ENCODE measurements at regions of chr17 and their contacts with region 1.

Region 1: DNA sequence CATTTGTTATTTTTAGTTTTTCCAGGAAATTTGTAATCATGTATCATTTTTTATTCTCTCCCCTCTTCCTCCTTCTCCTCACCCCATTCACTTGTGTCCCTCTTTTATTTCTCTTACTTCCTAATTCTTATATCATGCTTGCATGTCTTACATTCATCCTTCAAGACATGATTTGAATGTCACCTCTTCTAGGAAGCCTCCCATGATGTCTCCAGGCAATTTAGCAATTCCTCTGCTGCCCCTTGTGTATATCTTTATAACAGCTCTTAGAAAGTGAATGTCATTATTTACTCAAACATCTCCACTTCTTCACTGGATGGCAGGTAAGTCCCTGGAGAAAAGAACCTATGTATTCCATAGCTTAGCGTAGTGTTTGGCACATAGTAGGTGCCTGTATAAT is 7.8 kb downstream of the HNF1B start:
- DNase-seq: no peak
- ATAC-seq: no peak
- H3K4me3 ChIP-seq: no peak overlapping the region
- H3K27ac ChIP-seq: no peak overlapping the region
- H3K4me1 ChIP-seq: peaks cover 3% of the 10 kb centered on the region
- H3K27me3 ChIP-seq: peaks cover 47% of the 10 kb centered on the region
- CTCF ChIP-seq: peak; percentile 37
- POLR2A ChIP-seq: no peak
- RAD21 ChIP-seq: peak; percentile 40

Region 2: DNA sequence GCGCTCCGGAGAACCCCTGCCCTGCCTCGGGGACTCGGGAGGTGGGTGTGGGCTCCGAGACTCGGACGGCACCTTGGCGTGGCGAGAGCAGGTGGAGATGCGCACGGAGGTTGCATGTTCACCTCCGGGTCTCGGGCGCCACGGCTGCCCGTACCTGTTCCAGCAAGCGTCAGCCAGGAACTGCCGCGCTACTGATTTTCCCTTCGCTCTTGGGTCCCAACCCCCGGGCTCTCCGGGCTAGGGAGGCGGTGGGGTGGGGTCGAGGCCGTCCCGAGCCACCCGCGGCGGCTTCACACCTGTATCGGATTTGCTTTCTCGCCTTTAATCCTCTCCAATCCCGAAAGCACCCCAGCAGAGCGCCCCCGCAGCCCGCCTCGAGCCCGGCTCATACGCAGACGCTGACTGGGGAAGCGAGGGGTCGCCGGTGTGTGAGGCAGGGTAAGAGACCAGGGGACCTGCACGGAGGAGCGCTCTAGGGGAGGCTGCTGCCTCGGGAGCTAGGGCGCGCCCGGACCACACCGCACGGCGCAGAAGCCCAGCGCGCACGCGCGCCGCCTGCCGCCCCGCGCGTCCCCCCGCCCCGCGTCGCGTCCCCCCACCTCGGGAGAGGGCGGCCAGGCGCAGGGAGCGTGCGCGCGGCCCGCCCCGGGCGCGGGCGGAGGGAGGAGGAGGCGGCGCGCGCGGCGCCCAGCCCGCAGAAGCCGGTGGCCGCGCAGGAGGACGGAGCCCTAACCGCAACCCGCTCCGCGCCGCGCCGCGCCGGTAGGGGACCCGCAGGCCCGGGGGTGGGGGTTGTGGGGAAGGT is 247.7 kb before region 1 on chr17 and contains the start of gene DUSP14:
- CTCF ChIA-PET with region 1: no interaction called
- POLR2A ChIA-PET with region 1: no interaction called
- dilution Hi-C with region 1: no loop called
- in situ Hi-C with region 1: no loop called
- intact Hi-C with region 1: no loop called
- DNase-seq: peak; percentile 77
- ATAC-seq: peak; percentile 69
- H3K4me3 ChIP-seq: peak within 1 kb of the TSS; percentile 95
- H3K27ac ChIP-seq: peak within 1 kb of the TSS; percentile 94
- H3K4me1 ChIP-seq: peaks cover 11% of the 10 kb centered on the region
- H3K27me3 ChIP-seq: no peaks in the 10 kb centered on the region
- CTCF ChIP-seq: no peak
- POLR2A ChIP-seq: peak; percentile 78
- RAD21 ChIP-seq: no peak
- total RNA-seq, gene DUSP14: 97.5 and 102 TPM in 2 replicates

Region 3: DNA sequence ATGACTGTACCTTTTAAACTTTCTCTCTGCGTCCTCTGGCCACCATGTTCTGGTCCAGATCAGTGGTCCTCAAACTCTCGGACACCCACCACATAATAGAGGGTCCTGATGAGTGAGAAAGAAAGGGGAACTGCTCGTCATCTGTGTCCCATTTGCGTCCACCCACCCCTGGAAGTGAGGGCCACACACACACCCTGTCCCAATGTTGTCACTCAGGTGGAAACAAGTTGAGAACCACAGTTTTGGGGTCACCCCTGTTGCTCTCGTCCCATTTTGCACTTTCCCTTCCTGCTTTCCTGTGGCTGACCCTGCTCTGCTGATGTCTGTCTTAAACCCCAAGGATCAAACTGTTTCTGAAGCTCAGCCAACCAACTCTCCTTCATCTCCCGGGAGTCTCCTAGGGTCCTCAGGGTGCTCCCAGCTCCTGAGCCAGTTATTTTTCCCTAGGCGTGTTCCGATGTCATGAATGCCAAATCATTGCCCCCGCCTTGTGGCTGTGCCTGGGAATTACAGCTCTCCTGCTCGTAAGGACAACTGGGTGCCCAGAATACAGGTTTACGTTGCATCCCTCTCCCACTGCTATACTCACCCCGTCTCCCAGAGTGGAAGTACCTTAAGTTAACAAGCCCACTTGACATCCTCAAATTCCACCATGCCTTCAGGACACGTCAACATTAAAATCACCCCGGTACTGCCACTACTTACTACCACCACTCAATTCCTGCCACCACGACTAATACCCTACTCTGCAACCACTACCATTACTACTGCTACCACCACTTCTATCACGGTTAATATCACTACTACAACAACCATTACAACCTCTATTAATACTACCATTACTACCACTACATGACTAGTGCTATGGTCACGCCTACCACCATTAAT is 33.8 kb after region 1 on chr17:
- CTCF ChIA-PET with region 1: no interaction called
- POLR2A ChIA-PET with region 1: no interaction called
- dilution Hi-C with region 1: no loop called
- in situ Hi-C with region 1: no loop called
- intact Hi-C with region 1: no loop called
- DNase-seq: peak; percentile 62
- ATAC-seq: peak; percentile 92
- H3K4me3 ChIP-seq: no peak overlapping the region
- H3K27ac ChIP-seq: no peak overlapping the region
- H3K4me1 ChIP-seq: 0 out of 2 replicates have a peak, but pooled peaks cover 2% of the 10 kb centered on the region
- H3K27me3 ChIP-seq: no peaks in the 10 kb centered on the region
- CTCF ChIP-seq: peak; percentile 80
- POLR2A ChIP-seq: no peak
- RAD21 ChIP-seq: peak; percentile 85

Region 4: GRCh38 chr17:37824534-37825485 is 87.7 kb after region 1 on chr17:
- CTCF ChIA-PET with region 1: no interaction called
- POLR2A ChIA-PET with region 1: no interaction called
- dilution Hi-C with region 1: no loop called
- in situ Hi-C with region 1: no loop called
- intact Hi-C with region 1: loop called (anchors 10 kb)
- DNase-seq: peak; percentile 90
- ATAC-seq: peak; percentile 98
- H3K4me3 ChIP-seq: no peak overlapping the region
- H3K27ac ChIP-seq: peak overlapping the region; percentile 62
- H3K4me1 ChIP-seq: peaks cover 22% of the 10 kb centered on the region
- H3K27me3 ChIP-seq: no peaks in the 10 kb centered on the region
- CTCF ChIP-seq: no peak
- POLR2A ChIP-seq: no peak
- RAD21 ChIP-seq: no peak